PC-9 (cell line): ENCODE measurements at regions of chr7 and their contacts with region 1.

Region 1: GRCh38 chr7:141558544-141559183 is 7.5 kb downstream of the AGK start:
- DNase-seq: no peak
- H3K4me3 ChIP-seq: no peak overlapping the region
- H3K27ac ChIP-seq: no peak overlapping the region
- H3K4me1 ChIP-seq: no peaks in the 10 kb centered on the region
- H3K27me3 ChIP-seq: no peaks in the 10 kb centered on the region
- CTCF ChIP-seq: no peak

Region 2: DNA sequence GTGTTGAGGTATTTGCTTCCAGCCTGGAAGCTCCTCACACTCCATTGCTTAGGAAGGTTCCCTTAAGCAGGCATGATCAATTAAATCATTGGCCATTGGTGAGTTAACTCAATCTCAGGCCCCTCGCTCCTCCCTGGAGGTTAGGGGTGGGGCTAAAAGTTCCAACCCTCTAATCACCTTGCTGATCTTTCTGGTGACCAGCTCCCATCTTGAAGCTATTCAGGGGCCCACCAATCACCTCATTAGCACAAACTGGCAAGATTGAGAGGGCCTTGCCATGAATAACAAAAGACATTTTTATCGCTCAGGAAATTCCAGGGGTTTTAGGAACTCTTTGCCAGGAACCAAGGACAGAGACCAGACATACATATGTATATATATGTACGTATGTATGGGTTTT is 50.9 kb after region 1 on chr7:
- CTCF ChIA-PET with region 1: no interaction called
- POLR2A ChIA-PET with region 1: no interaction called
- intact Hi-C with region 1: loop called (anchors 5 kb)
- DNase-seq: peak in 1 of 2 experiments; percentile 13
- H3K4me3 ChIP-seq: no peak overlapping the region
- H3K27ac ChIP-seq: no peak overlapping the region
- H3K4me1 ChIP-seq: no peaks in the 10 kb centered on the region
- H3K27me3 ChIP-seq: no peaks in the 10 kb centered on the region
- CTCF ChIP-seq: no peak

Region 3: GRCh38 chr7:142898377-142899170 is 1339.9 kb after region 1 on chr7:
- CTCF ChIA-PET with region 1: no interaction called
- POLR2A ChIA-PET with region 1: no interaction called
- intact Hi-C with region 1: no loop called
- DNase-seq: peak; percentile 66 to 68
- H3K4me3 ChIP-seq: no peak overlapping the region
- H3K27ac ChIP-seq: no peak overlapping the region
- H3K4me1 ChIP-seq: peaks cover 28% of the 10 kb centered on the region
- H3K27me3 ChIP-seq: no peaks in the 10 kb centered on the region
- CTCF ChIP-seq: no peak